A549 (cell line): ENCODE measurements at regions of chr5 and their contacts with region 1.

Region 1: DNA sequence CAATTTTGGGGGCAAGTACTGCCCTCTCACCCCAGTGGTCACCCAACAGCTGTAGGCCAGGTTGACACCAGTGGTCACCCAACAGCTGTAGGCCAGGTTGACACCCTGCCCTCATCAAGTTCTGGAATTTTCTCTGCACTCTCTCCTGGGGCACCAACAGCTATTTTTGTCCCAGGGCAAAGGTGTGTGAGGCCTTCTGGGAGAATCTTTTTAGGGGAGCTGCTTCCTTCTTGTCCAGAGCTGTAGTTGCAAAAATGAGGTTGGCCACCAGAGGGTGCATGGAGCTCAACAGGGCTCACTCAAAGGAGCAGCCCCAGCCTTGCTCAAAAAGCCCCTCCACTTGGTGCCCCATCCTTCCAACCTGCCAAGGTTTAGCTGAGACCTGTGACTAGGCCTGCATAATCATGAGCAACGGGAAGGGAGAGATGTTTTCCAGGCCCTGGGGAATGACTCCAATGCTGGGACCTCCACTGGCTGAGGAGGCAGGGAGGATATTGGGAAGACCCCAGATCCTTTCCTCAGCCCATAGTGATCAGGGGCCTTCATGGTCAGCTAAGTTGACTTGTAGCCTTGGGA is 10.6 kb upstream of the P4HA2 start:
- DNase-seq: peak; percentile 69 to 71
- ATAC-seq: peak; percentile 83 to 96
- H3K4me3 ChIP-seq: no peak overlapping the region
- H3K27ac ChIP-seq: 0 out of 6 replicates have a peak overlapping the region, but pooled peaks of 1 of the 2 experiments have one; percentile 20
- H3K4me1 ChIP-seq: no peaks in the 10 kb centered on the region
- CTCF ChIP-seq: peak; percentile 67
- EP300 ChIP-seq: no peak
- POLR2A ChIP-seq: no peak
- RAD21 ChIP-seq: peak; percentile 71 to 73

Region 2: GRCh38 chr5:132227485-132228240 is 10.6 kb before region 1 on chr5 and contains the start of gene P4HA2:
- CTCF ChIA-PET with region 1: interaction called, 39 read pairs
- POLR2A ChIA-PET with region 1: interaction called, 6 read pairs
- DNase-seq: peak; percentile 68 to 78
- ATAC-seq: peak; percentile 90 to 95
- H3K4me3 ChIP-seq: peak within 1 kb of the TSS; percentile 77
- H3K27ac ChIP-seq: peak within 1 kb of the TSS; percentile 92 to 98
- H3K4me1 ChIP-seq: peaks cover 21% of the 10 kb centered on the region; the same call in 2 of the 3 replicates
- CTCF ChIP-seq: no peak; the same call in 2 of the 3 replicates
- EP300 ChIP-seq: no peak
- POLR2A ChIP-seq: peak; percentile 78
- RAD21 ChIP-seq: no peak
- polyA plus RNA-seq, gene P4HA2: 45.0 and 64.9 TPM in 2 replicates

Region 3: DNA sequence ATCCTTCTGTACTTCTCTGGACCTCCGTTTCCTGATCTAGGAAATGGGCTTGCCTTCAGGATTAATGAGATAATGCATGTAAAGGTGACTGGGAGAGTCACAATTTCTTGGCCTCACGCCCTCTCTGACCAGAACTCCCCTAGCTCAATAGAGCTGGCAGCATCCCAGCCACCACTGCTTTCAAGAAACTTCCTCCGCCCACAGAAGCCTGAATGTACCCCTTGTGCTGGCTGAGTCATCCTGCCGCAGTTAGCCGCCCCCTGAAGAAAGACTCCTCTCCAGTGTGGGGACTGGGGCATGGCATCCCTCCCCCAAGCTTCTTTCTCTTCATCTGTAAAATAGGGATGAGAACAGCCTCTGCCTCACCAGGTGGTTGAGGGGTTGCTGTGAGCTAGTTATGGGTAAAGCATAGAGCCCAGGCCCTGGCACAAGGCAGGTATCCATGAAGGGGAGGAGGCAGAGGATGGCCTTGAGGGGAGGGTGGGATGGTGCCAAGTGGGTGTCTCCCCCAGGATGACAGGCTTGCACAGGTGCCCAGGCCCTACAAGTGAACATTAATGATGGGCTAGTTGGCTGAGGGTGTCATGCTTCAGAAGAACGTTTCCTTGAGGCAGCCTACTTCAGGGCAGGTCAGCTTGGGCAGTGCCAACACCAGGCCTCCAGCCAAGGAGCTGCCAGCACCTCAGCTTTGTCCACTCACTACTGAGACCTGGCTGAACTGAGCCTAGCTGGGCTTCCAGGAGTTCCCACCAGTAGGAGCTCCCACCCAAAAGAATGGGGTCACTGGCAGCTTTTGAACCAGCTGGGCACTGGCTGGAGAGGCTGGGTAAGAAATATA is 22.7 kb after region 1 on chr5:
- CTCF ChIA-PET with region 1: interaction called, 26 read pairs
- POLR2A ChIA-PET with region 1: no interaction called
- DNase-seq: no peak
- ATAC-seq: no peak
- H3K4me3 ChIP-seq: no peak overlapping the region
- H3K27ac ChIP-seq: peak overlapping the region in 1 of 2 experiments; percentile 72; a peak in 3 of 6 replicates
- H3K4me1 ChIP-seq: peaks cover 44% of the 10 kb centered on the region
- CTCF ChIP-seq: no peak
- EP300 ChIP-seq: no peak
- POLR2A ChIP-seq: no peak
- RAD21 ChIP-seq: no peak

Region 4: DNA sequence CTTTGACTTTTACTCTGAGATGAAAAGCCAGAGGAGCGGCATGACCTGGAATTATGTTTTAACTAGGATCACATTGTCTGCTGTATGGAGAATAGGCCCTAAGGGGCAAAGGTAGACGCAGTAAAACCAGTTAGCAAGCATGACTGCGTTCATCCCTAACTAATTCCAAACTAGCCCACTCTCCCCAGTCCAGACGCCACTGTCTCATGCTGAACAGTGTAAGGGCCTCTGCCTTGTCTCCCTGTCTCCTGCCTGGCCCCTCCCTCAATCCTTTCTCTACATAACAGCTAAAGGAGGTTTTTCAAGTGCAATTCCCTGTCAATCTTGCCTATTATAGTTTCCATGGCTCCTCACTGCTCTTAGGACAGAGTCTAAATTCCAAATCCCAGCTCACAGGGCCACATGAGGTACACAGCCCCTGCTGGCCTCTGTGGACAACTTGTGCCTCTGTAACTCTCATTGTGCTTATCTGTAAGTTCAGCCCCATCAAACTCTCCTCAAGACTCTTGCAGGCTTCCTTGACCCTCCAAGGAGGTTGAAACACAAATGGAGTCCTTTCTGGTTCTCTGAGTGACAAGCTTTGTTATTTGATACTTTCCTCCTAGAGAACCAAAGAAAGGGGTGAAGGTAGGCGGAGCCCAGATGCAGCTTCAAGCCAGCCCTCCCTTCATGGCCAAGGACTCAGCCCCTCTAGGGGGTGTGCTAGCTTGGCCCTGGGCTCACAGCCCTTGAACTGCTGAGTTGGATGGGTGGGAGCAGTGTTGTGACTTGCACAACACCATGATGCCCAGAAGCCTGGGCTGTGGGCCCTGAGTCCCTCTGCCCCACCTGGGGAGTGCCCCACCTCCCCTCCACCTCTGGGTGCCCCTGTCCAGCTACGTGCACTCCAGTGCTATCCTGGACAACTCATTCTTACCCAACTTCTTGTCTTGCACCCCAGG is 40.0 kb after region 1 on chr5:
- CTCF ChIA-PET with region 1: interaction called, 27 read pairs
- POLR2A ChIA-PET with region 1: no interaction called
- DNase-seq: no peak
- ATAC-seq: no peak
- H3K4me3 ChIP-seq: no peak overlapping the region
- H3K27ac ChIP-seq: no peak overlapping the region
- H3K4me1 ChIP-seq: no peaks in the 10 kb centered on the region
- CTCF ChIP-seq: no peak
- EP300 ChIP-seq: no peak
- POLR2A ChIP-seq: no peak
- RAD21 ChIP-seq: no peak

Region 5: DNA sequence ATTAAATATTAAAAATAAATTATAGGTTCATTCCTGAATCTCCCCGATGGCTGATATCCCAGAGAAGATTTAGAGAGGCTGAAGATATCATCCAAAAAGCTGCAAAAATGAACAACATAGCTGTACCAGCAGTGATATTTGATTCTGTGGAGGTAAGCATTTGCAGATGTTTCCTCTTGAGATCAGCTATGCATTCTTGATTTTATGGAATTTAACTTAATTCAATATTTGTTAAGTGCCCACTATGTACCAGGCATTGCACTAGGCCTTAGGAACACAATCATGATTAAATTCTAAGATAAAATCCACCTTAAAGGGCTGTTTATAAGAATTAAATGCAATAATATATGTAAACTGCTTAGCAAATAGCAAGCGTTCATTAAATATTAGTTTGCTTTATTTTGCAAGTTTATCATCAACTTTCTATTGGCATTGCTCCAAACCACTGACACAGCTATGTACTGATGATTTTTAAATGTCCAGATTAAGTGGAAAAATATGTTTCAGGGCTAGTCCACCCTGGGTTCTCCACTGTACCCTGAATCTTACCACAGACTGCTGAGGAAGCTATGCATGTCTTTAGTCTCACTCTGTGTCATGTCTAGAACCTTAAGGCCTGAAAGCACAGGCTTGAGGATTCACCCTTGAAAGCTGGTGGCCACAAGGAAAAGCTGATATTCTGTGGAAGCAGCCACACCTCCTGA is 89.1 kb after region 1 on chr5:
- CTCF ChIA-PET with region 1: interaction called, 13 read pairs
- POLR2A ChIA-PET with region 1: no interaction called
- DNase-seq: no peak
- ATAC-seq: no peak
- H3K4me3 ChIP-seq: no peak overlapping the region
- H3K27ac ChIP-seq: no peak overlapping the region
- H3K4me1 ChIP-seq: peaks cover 9% of the 10 kb centered on the region; the same call in 2 of the 3 replicates
- CTCF ChIP-seq: no peak
- EP300 ChIP-seq: no peak
- POLR2A ChIP-seq: no peak
- RAD21 ChIP-seq: no peak